ENCODE measurements at regions of chr12 and their contacts with region 1.

Region 1: DNA sequence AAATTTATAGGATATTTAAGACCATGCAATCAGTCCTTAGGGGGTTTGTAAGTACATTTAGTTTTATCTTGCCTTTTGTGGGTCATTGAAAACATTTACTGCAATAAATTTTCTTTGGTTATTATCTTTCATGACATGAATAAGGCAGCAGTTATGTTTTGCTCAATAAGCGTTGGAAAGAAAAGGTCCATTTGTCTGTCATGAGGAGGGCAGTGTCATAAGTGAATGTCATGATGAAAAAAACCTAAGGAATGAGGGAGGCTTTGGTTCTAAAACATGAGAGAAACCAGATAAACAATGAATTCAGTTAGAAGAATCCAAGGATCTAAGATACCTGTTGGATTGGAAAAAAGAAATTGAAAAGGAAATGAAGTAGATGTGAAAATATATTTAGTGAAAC is 209.4 kb downstream of the NAV3 start:
- DNase-seq: no peak
- ATAC-seq: no peak
- H3K4me3 ChIP-seq: no peak overlapping the region
- H3K4me3 Mint-ChIP-seq: no peak overlapping the region
- H3K27ac ChIP-seq: no peak overlapping the region
- H3K27ac Mint-ChIP-seq: no peak overlapping the region
- H3K4me1 ChIP-seq: no peaks in the 10 kb centered on the region
- H3K4me1 Mint-ChIP-seq: peaks cover 0 to 3% (median 0%) of the 10 kb centered on the region in 7 donors
- H3K27me3 ChIP-seq: no peaks in the 10 kb centered on the region
- H3K27me3 Mint-ChIP-seq: no peaks in the 10 kb centered on the region

Region 2: GRCh38 chr12:78530100-78530765 is 490.1 kb after region 1 on chr12:
- CTCF ChIA-PET with region 1: no interaction called
- POLR2A ChIA-PET with region 1: no interaction called
- intact Hi-C with region 1: loop called in 1 of 2 experiments (anchors 5 kb)
- DNase-seq: no peak
- ATAC-seq: no peak
- H3K4me3 ChIP-seq: no peak overlapping the region
- H3K4me3 Mint-ChIP-seq: no peak overlapping the region
- H3K27ac ChIP-seq: no peak overlapping the region
- H3K27ac Mint-ChIP-seq: no peak overlapping the region
- H3K4me1 ChIP-seq: no peaks in the 10 kb centered on the region
- H3K4me1 Mint-ChIP-seq: no peaks in the 10 kb centered on the region
- H3K27me3 ChIP-seq: no peaks in the 10 kb centered on the region
- H3K27me3 Mint-ChIP-seq: no peaks in the 10 kb centered on the region

Measured in naive thymus-derived CD4-positive, alpha-beta T cell (primary cell).